Activated T-helper 1 cell treated with anti-CD3 and anti-CD28 coated beads, Interleukin-12 subunit alpha, Interleukin-12 subunit beta, Interleukin-2, Interleukin-4 antibody, amounts not matched to agents 30 ng/mL and 10 ng/mL and 1 ng/mL, durations not matched to agents 14 hours and 24 hours and 36 hours (primary cell): ENCODE measurements at regions of chr3 and their contacts with region 1.

Region 1: GRCh38 chr3:128879125-128879969 is at the start of gene ACAD9:
- DNase-seq: peak; percentile 98
- H3K4me3 Mint-ChIP-seq: peak within 1 kb of the TSS; percentile 88
- H3K27ac Mint-ChIP-seq: peak within 1 kb of the TSS; percentile 92
- H3K4me1 Mint-ChIP-seq: peaks cover 71% of the 10 kb centered on the region
- H3K27me3 Mint-ChIP-seq: no peaks in the 10 kb centered on the region
- total RNA-seq, gene ACAD9: 65.3 and 67.2 TPM in 2 replicates

Region 2: GRCh38 chr3:128617557-128618397 is 261.6 kb before region 1 on chr3:
- intact Hi-C with region 1: loop called (anchors 1 kb)
- DNase-seq: peak; percentile 98
- H3K4me3 Mint-ChIP-seq: peak overlapping the region; percentile 98
- H3K27ac Mint-ChIP-seq: peak overlapping the region; percentile 97
- H3K4me1 Mint-ChIP-seq: peaks cover 29% of the 10 kb centered on the region
- H3K27me3 Mint-ChIP-seq: no peaks in the 10 kb centered on the region

Region 3: GRCh38 chr3:128698211-128699064 is 180.9 kb before region 1 on chr3:
- intact Hi-C with region 1: no loop called
- DNase-seq: no peak
- H3K4me3 Mint-ChIP-seq: peak overlapping the region; percentile 58
- H3K27ac Mint-ChIP-seq: no peak overlapping the region
- H3K4me1 Mint-ChIP-seq: no peaks in the 10 kb centered on the region
- H3K27me3 Mint-ChIP-seq: peaks cover 8% of the 10 kb centered on the region

Region 4: GRCh38 chr3:128725932-128726690 is 153.2 kb before region 1 on chr3 and contains the start of gene RAB7A:
- intact Hi-C with region 1: loop called (anchors 1 kb)
- DNase-seq: peak; percentile 94
- H3K4me3 Mint-ChIP-seq: peak within 1 kb of the TSS; percentile 99
- H3K27ac Mint-ChIP-seq: peak within 1 kb of the TSS; percentile 93
- H3K4me1 Mint-ChIP-seq: peaks cover 56% of the 10 kb centered on the region
- H3K27me3 Mint-ChIP-seq: no peaks in the 10 kb centered on the region
- total RNA-seq, gene RAB7A: 318 and 329 TPM in 2 replicates

Region 5: GRCh38 chr3:128845778-128846485 is 33.4 kb before region 1 on chr3:
- intact Hi-C with region 1: loop called (anchors 2 kb)
- DNase-seq: peak; percentile 75
- H3K4me3 Mint-ChIP-seq: peak overlapping the region; percentile 77
- H3K27ac Mint-ChIP-seq: peak overlapping the region; percentile 90
- H3K4me1 Mint-ChIP-seq: peaks cover 18% of the 10 kb centered on the region
- H3K27me3 Mint-ChIP-seq: no peaks in the 10 kb centered on the region

Region 6: GRCh38 chr3:129026728-129027543 is 147.6 kb after region 1 on chr3:
- intact Hi-C with region 1: loop called (anchors 5 kb)
- DNase-seq: peak; percentile 93
- H3K4me3 Mint-ChIP-seq: peak overlapping the region; percentile 80
- H3K27ac Mint-ChIP-seq: peak overlapping the region; percentile 87
- H3K4me1 Mint-ChIP-seq: peaks cover 24% of the 10 kb centered on the region
- H3K27me3 Mint-ChIP-seq: peaks cover 13% of the 10 kb centered on the region

Region 7: DNA sequence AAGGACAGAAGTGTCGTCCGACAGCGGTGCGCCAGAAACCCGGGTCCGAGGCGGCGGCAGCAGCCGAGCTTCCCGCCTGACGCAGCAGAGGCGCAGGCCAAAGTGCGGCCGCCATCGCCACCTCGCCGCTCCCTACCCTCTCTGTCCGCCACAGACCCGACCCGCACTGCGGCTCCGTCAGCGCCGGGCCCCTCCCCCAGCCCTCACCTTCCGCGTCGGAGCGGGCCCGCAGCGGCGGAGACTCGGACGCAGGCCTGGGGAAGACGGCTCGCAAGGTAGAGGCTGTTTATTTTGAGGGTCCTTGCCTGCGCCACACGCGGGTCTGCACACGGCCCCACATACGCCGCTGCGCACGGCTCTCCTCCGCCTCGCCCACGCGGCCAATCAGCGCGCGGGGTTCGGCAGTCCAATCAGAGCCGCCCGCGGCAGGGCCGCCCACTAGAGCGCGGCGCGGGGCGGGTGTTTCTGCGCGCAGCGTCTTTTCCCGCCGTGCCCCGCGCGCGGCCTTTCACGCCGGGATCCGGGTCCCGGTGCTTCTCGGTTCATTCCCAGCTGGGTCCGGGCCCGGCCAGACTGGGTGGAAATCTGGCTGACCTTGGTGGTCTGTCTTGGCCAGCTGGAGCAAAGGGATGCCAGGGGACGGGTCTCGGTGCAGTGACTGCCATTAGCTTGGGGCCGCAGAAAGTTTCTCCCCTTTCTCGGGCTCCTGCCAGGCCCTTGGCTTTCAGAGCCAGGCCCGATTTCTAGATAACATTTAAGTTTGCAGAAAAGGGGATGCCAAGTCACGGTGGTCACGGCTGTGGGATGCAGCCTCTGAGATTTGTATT is 304.4 kb after region 1 on chr3 and contains the start of gene CNBP:
- intact Hi-C with region 1: loop called (anchors 5 kb)
- DNase-seq: peak; percentile 91
- H3K4me3 Mint-ChIP-seq: peak within 1 kb of the TSS; percentile 97
- H3K27ac Mint-ChIP-seq: peak within 1 kb of the TSS; percentile 98
- H3K4me1 Mint-ChIP-seq: peaks cover 35% of the 10 kb centered on the region
- H3K27me3 Mint-ChIP-seq: no peaks in the 10 kb centered on the region
- total RNA-seq, gene CNBP: 408 and 425 TPM in 2 replicates

Region 8: DNA sequence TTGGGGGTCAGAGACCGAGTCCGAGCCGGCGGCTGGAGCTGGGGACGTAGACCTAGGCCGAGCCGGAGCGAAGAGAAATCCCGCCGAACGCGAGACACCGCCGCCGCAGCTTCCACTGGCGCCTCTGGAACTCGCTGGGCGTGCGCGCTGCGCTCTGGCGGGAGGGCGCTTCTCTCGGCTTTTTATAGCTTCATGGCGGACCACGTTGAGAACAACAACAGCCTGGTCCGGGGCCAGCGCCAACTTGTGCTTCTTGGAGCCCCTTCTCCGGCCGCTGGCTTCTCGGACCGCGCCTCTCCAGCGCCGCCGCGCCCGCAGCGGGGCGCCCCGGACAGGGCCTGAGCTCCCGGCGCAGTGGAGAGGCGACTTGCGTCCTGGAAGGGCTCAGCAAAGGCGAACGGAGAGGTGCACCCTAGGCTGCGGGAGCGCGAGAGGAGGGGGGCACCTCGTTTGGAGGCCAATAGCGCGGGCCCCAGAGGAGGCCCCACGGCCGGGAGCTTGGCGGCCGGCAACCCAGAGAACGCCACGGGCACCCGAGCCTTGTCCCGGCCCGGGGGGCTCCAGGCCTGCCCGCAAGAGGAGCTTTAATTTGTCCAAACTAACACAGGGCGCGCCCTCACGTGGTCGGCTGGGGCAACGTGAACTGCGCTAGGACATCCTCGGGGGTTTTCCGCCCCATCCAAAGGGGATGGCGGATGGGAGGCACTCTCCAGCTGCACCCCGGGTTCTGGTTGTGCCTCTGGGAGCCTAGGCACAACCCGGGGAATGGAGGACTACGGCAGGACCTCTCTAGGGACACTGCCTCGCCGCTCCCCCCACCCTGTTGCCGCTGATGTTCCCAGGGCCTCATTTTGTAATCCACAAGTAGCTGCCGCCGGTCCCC is 437.0 kb after region 1 on chr3:
- intact Hi-C with region 1: loop called (anchors 2 kb)
- DNase-seq: peak; percentile 88
- H3K4me3 Mint-ChIP-seq: peak overlapping the region; percentile 81
- H3K27ac Mint-ChIP-seq: peak overlapping the region; percentile 80
- H3K4me1 Mint-ChIP-seq: peaks cover 32% of the 10 kb centered on the region
- H3K27me3 Mint-ChIP-seq: no peaks in the 10 kb centered on the region